Activated T-helper 1 cell treated with anti-CD3 and anti-CD28 coated beads, Interleukin-12 subunit alpha, Interleukin-12 subunit beta, Interleukin-2, Interleukin-4 antibody, amounts not matched to agents 30 ng/mL and 10 ng/mL and 1 ng/mL, durations not matched to agents 14 hours and 24 hours and 36 hours (primary cell): ENCODE measurements at regions of chr5 and their contacts with region 1.

Region 1: DNA sequence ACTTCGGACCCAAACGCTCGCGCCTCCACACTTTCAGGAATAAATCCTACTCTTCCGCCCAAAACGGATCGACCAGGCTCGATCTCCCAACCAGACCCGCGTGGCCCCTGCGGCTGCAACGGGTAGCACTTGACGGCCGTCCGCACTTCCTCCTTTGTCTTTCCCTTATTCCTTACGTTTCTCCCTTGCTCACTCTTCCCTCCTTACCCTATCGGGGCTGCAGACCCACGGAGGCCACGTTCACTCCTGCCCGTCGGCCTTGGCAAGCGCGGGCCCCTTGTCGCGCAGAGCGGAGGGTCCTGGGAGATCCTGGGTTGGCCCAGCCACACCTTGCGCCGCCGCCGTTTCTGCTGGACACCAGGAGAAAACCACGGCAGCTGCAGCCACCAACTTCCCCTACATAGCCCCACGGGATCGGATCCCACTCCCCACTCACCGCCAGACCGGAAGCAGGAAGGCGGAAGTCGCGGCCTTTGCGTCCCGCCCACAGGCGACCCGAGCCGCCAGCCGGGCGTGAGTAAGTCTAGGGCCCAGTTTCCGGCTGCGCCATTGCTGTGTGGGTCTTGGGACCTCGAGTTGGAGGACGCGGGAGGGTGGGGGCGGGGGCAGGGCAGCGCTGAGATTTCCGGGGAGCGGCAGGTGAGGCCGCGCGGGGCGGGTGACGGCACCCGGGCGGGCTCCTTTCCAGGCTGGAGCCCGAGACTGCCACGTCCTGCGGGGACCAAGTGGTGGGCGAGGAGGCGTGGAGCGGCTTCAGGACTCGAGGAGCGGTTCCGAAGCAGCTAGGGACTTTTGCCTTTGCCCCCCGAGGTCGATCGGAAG is at the start of gene SMIM15:
- DNase-seq: peak; percentile 81
- H3K4me3 Mint-ChIP-seq: peak within 1 kb of the TSS; percentile 95
- H3K27ac Mint-ChIP-seq: peak within 1 kb of the TSS; percentile 92
- H3K4me1 Mint-ChIP-seq: peaks cover 40% of the 10 kb centered on the region
- H3K27me3 Mint-ChIP-seq: no peaks in the 10 kb centered on the region
- total RNA-seq, gene SMIM15: 84.0 and 86.7 TPM in 2 replicates

Region 2: GRCh38 chr5:60944904-60945812 is 217.1 kb before region 1 on chr5 and contains the starts of genes ERCC8 and NDUFAF2:
- intact Hi-C with region 1: loop called (anchors 2 kb)
- DNase-seq: peak; percentile 85
- H3K4me3 Mint-ChIP-seq: no peak within 1 kb of the TSS
- H3K27ac Mint-ChIP-seq: no peak within 1 kb of the TSS
- H3K4me1 Mint-ChIP-seq: peaks cover 22% of the 10 kb centered on the region
- H3K27me3 Mint-ChIP-seq: no peaks in the 10 kb centered on the region
- total RNA-seq, gene ERCC8: 9.8 and 10.7 TPM in 2 replicates
- total RNA-seq, gene NDUFAF2: 32.9 and 33.8 TPM in 2 replicates

Region 3: GRCh38 chr5:60993425-60993824 is 168.8 kb before region 1 on chr5:
- intact Hi-C with region 1: no loop called
- DNase-seq: no peak
- H3K4me3 Mint-ChIP-seq: no peak overlapping the region
- H3K27ac Mint-ChIP-seq: no peak overlapping the region
- H3K4me1 Mint-ChIP-seq: no peaks in the 10 kb centered on the region
- H3K27me3 Mint-ChIP-seq: no peaks in the 10 kb centered on the region

Region 4: DNA sequence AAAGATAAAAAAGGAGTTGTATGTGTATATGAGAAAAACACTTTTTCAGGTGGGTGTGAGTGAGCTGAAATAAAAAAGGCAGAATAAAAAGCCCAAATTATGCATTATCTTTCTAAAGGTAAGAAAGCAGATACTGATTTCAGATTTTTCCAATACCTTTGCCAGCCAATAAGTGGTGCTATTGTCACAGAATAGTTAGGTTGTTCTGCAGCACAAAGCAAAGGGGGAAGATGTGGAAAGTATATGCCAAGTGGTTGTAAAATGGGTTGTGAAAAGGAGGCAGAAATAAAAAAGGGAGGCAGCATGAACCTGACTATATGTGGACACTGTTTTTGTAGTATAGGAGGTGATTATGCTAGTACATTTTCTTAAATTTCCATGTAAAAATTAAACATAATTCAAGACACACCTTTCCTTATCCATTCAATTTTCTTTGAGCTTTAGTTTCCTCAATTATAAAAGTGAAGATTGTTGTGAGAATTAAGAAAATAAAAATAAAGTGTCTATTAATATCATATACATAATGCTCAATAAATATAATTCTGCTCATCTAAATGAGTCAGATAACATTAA is 106.7 kb before region 1 on chr5:
- intact Hi-C with region 1: loop called (anchors 1 kb)
- DNase-seq: no peak
- H3K4me3 Mint-ChIP-seq: no peak overlapping the region
- H3K27ac Mint-ChIP-seq: no peak overlapping the region
- H3K4me1 Mint-ChIP-seq: no peaks in the 10 kb centered on the region
- H3K27me3 Mint-ChIP-seq: no peaks in the 10 kb centered on the region

Region 5: DNA sequence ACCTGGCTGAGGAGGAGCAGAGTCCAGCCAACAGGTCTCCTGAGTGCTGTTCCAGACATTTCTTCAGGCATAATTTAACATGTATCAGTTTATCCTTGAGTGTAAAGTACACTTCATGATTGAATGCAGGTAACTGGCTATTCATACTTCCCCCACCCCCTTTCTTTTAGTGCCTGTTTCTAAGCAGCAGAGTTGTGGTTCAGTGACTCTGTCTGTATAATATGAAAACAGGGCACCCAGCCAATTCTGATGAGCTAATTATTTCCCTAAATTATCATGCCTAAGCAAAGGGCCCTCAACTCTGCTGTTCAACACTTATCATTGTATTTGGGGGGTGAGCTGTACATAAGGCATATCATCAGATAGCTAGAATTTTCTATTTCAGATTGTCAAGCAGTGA is 118.0 kb after region 1 on chr5:
- intact Hi-C with region 1: loop called (anchors 2 kb)
- DNase-seq: no peak
- H3K4me3 Mint-ChIP-seq: no peak overlapping the region
- H3K27ac Mint-ChIP-seq: no peak overlapping the region
- H3K4me1 Mint-ChIP-seq: peaks cover 11% of the 10 kb centered on the region
- H3K27me3 Mint-ChIP-seq: no peaks in the 10 kb centered on the region

Region 6: DNA sequence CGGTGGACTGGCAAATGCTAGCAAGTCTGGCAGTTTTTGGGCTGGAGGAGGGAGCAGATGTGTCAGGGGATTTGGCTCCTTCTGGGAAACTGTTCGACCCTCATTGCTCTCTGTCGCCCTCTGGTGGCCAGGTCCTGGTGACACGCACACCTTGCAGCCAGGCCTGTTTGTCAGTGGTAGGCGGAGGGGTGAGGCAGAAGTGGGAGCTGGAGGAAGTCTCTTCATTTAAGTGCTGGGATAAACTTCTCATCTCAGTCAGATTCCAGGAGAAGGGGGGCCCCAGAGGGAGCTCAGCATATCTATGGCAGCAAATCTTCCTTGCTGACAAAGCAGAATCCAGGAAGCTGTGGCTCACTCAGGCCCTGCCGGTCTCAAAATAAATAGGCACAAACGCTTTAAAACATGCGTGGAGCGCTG is 496.4 kb after region 1 on chr5:
- intact Hi-C with region 1: loop called (anchors 2 kb)
- DNase-seq: peak; percentile 51
- H3K4me3 Mint-ChIP-seq: no peak overlapping the region
- H3K27ac Mint-ChIP-seq: no peak overlapping the region
- H3K4me1 Mint-ChIP-seq: no peaks in the 10 kb centered on the region
- H3K27me3 Mint-ChIP-seq: peaks cover 7% of the 10 kb centered on the region